ENCODE measurements at regions of chr4 and their contacts with region 1.

Region 1: GRCh38 chr4:73735231-73735630 is 5.1 kb upstream of the CXCL8 start:
- DNase-seq: no peak
- H3K4me3 Mint-ChIP-seq: no peak overlapping the region
- H3K27ac Mint-ChIP-seq: no peak overlapping the region
- H3K4me1 Mint-ChIP-seq: peaks cover 37% of the 10 kb centered on the region
- H3K27me3 Mint-ChIP-seq: no peaks in the 10 kb centered on the region

Region 2: GRCh38 chr4:73718375-73719373 is 16.6 kb before region 1 on chr4:
- intact Hi-C with region 1: loop called (anchors 1 kb)
- DNase-seq: no peak
- H3K4me3 Mint-ChIP-seq: no peak overlapping the region
- H3K27ac Mint-ChIP-seq: no peak overlapping the region
- H3K4me1 Mint-ChIP-seq: peaks cover 16% of the 10 kb centered on the region
- H3K27me3 Mint-ChIP-seq: peaks cover 1% of the 10 kb centered on the region

Measured in activated T-helper 1 cell treated with anti-CD3 and anti-CD28 coated beads, Interleukin-12 subunit alpha, Interleukin-12 subunit beta, Interleukin-2, Interleukin-4 antibody, amounts not matched to agents 30 ng/mL and 10 ng/mL and 1 ng/mL, durations not matched to agents 14 hours and 24 hours and 36 hours (primary cell).